ENCODE measurements at regions of chr20 and their contacts with region 1.

Region 1: DNA sequence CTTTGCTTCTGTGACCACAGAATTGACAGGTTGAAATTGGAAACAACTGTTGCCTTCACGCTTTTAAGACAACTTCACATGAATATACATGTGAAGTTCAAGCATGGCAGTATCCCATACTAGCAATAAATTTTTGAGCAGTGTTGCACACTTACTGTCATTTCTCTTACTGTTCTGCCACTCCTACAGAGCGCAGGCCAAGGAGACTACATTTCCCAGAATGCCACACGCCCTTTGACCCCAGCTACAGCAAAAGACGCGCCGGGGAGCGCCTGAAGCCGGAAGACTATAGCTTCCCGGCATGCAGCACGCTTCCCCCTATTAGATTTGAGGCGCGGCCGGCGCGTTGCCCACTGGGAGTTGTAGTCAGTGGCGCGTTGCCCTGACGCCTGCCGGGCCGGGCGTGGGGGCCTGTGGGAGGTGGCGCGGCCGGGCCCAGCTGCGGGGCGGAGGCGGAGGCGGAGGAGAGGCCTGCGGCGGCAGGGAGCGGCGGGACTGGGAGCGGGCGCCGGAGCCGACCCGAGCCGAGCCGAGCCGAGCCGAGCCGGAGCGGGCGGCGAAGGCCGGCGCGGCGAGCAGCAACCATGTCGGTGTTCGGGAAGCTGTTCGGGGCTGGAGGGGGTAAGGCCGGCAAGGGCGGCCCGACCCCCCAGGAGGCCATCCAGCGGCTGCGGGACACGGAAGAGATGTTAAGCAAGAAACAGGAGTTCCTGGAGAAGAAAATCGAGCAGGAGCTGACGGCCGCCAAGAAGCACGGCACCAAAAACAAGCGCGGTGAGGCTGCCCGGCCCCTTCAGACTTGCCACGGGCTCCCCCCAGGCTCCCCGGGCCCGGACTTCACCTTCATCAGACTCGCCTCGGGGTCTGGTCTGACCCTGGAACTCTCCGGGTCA is at the start of gene CHMP4B:
- DNase-seq: peak; percentile 100
- ATAC-seq: peak; percentile 98
- total RNA-seq, gene CHMP4B: 82.2 to 97.7 TPM

Region 2: GRCh38 chr20:33744773-33745385 is 66.3 kb before region 1 on chr20:
- intact Hi-C with region 1: loop called in 1 of 2 experiments (anchors 10 kb)
- DNase-seq: no peak
- ATAC-seq: no peak

Region 3: GRCh38 chr20:33992923-33993575 is 181.9 kb after region 1 on chr20:
- intact Hi-C with region 1: loop called in 1 of 2 experiments (anchors 1 kb)
- DNase-seq: peak; percentile 99
- ATAC-seq: peak; percentile 91 to 95